Activated CD8-positive, alpha-beta memory T cell treated with anti-CD3 and anti-CD28 coated beads, Interleukin-2, amount 10 ng/mL, durations not matched to agents 7 days and 5 days (primary cell): ENCODE measurements at regions of chr5 and their contacts with region 1.

Region 1: GRCh38 chr5:64612344-64612961 is 77.8 kb upstream of the SHISAL2B start:
- DNase-seq: no peak
- ATAC-seq: no peak
- H3K4me3 Mint-ChIP-seq: no peak overlapping the region
- H3K27ac Mint-ChIP-seq: no peak overlapping the region
- H3K4me1 Mint-ChIP-seq: no peaks in the 10 kb centered on the region
- H3K27me3 Mint-ChIP-seq: peaks cover 29% of the 10 kb centered on the region

Region 2: GRCh38 chr5:64229163-64229774 is 383.2 kb before region 1 on chr5:
- CTCF ChIA-PET with region 1: interaction called, 10 read pairs
- DNase-seq: no peak
- ATAC-seq: no peak
- H3K4me3 Mint-ChIP-seq: no peak overlapping the region
- H3K27ac Mint-ChIP-seq: no peak overlapping the region
- H3K4me1 Mint-ChIP-seq: no peaks in the 10 kb centered on the region
- H3K27me3 Mint-ChIP-seq: no peaks in the 10 kb centered on the region

Region 3: DNA sequence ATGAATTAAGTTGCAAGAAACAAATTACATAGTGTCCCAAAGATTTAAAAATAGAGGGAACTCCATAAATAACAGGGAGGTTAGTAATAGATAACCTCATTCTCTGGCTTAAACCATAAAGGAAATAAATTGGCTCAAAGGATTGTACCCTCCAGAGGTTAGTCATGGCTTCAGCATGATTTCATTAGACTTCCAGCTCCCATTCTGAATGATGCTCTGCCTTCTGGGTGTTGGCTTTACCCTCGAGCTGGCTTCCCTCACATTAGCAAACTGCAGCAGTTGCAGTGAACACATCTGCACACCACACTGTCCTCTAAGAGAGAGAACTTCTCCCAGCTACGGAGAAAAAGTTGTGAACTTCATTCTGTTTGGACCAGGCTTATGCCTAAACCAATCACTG is 36.2 kb before region 1 on chr5:
- CTCF ChIA-PET with region 1: no interaction called
- DNase-seq: no peak
- ATAC-seq: no peak
- H3K4me3 Mint-ChIP-seq: no peak overlapping the region
- H3K27ac Mint-ChIP-seq: no peak overlapping the region
- H3K4me1 Mint-ChIP-seq: no peaks in the 10 kb centered on the region
- H3K27me3 Mint-ChIP-seq: peaks cover 6% of the 10 kb centered on the region

Region 4: DNA sequence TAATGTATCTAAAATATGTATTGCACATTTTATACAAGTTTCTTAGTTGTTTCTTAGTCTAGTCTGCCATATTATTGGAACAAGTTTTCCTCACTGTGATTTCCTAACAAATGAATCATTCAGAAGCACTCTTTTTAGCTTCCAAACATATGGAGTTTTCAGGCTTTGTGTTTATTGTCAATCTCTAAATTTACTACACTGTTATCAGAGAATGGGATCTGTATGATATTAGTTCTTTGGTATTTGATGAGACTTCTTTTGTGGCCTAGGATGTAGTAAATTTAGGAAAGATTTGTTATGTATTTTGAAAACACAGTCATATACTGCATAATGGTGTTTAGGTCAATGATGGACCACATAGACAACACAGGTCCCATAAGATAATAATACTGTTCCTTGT is 130.4 kb after region 1 on chr5:
- CTCF ChIA-PET with region 1: no interaction called
- DNase-seq: no peak
- ATAC-seq: no peak
- H3K4me3 Mint-ChIP-seq: no peak overlapping the region
- H3K27ac Mint-ChIP-seq: no peak overlapping the region
- H3K4me1 Mint-ChIP-seq: peaks cover 1% of the 10 kb centered on the region
- H3K27me3 Mint-ChIP-seq: no peaks in the 10 kb centered on the region

Region 5: DNA sequence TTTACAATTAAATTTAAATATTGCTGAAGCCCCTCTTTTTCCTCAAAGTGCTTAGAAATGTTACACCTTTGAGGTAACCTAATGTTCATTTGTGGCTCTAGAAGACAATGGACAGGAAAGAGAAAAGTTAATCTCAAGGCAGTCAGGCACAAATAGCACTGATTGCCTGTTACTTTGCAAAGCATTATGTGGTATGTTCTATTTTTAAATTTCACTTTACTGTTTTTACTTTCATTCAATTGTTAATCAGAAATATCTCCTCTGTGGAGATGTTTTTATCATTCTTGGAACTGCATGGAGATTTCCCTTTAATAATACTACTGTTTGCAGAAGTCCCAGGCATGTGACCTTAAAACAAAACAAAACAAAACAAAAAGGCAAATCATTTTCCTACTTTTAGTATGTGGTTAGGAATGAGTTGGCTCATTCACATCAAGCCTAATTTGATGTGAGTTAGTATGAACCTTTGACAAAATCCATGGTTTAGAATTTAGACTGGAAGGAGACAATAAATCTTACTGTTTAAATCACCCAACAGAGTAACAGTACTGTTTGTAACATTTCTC is 223.8 kb after region 1 on chr5:
- CTCF ChIA-PET with region 1: no interaction called
- DNase-seq: no peak
- ATAC-seq: no peak
- H3K4me3 Mint-ChIP-seq: no peak overlapping the region
- H3K27ac Mint-ChIP-seq: no peak overlapping the region
- H3K4me1 Mint-ChIP-seq: peaks cover 3% of the 10 kb centered on the region
- H3K27me3 Mint-ChIP-seq: no peaks in the 10 kb centered on the region